Astrocyte of the cerebellum (primary cell): ENCODE measurements at regions of chr10 and their contacts with region 1.

Region 1: DNA sequence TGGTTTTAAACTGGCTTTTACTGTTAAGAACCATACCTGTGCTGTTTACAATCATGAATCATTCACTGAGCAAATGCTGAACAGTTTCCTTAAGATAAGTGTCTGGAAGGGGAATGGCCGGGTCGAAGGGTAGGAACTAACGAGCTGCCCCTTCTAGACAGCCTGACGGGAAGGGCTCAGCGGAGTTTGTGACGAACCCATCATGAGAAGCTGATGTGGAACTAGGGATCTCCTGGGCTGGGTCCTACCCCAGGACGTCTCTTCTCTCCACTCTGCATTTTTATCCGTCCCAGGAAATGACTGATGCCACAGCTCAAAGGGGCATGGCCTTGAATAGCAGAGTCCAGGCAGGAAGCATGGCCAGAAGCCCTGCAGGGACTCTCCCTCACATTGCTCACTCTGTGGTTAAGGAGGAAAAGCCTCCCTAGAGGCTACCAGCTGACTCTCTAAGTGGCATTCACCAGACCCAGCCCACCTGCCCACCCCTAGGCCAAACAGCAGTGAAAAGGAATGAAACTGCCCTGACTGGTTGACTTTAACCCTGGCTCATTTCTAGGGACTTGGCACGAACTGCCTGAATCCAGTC is 112.0 kb downstream of the PFKFB3 start:
- DNase-seq: no peak
- H3K4me3 ChIP-seq: no peak overlapping the region
- CTCF ChIP-seq: no peak

Region 2: DNA sequence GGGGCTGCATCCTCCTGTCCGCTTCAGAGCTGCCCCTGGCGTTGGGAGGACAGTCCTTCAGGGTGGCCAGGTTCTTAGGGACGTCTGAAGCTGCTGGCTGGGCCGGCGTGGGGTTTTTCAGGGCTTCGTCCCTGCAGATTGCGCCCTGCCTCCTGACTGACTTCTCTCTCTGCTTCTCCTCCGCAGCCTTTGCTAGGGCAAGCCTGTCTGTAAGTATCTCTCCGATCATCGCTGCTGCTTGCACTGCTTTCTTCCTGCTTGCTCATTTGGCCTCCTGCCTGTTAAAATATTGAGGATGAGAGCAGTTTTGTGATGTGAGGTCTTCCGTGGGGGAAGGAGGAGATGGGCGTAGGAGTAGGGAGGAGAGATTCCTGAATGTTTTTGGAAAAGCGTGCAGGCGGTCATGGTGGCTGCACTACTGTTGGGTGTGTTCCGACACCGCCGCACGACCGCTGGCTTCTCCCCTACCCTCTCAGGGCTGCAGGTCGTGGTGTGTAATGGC is 86.7 kb before region 1 on chr10:
- in situ Hi-C with region 1: no loop called
- DNase-seq: peak; percentile 53
- H3K4me3 ChIP-seq: no peak overlapping the region
- CTCF ChIP-seq: no peak

Region 3: GRCh38 chr10:6254201-6254600 is 60.5 kb before region 1 on chr10:
- in situ Hi-C with region 1: no loop called
- DNase-seq: no peak
- H3K4me3 ChIP-seq: no peak overlapping the region
- CTCF ChIP-seq: no peak

Region 4: DNA sequence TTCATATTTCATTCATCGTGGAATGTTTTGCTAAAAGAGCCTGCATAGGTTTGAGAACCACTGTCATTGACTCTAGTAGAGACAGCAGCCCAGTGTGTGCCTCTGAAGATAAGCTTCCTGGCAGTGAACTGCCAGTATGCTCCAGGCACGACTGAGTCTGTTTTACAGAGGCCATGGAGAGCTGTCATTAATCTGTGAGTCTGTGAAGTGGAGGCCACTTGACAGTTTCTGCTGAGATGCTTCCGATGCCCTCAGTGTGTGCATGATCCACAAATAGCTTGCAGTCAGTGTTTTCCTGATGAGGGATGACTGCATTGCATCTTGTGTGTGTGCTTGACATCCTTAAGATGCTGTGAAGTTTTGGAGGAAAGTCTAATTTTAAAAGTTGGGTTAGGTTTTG is 50.2 kb after region 1 on chr10:
- in situ Hi-C with region 1: loop called (anchors 10 kb)
- DNase-seq: no peak
- H3K4me3 ChIP-seq: no peak overlapping the region
- CTCF ChIP-seq: no peak